Activated CD8-positive, alpha-beta T cell treated with anti-CD3 and anti-CD28 coated beads, Interleukin-2, amount 10 ng/mL, durations not matched to agents 7 days and 5 days (primary cell): ENCODE measurements at regions of chr4 and their contacts with region 1.

Region 1: DNA sequence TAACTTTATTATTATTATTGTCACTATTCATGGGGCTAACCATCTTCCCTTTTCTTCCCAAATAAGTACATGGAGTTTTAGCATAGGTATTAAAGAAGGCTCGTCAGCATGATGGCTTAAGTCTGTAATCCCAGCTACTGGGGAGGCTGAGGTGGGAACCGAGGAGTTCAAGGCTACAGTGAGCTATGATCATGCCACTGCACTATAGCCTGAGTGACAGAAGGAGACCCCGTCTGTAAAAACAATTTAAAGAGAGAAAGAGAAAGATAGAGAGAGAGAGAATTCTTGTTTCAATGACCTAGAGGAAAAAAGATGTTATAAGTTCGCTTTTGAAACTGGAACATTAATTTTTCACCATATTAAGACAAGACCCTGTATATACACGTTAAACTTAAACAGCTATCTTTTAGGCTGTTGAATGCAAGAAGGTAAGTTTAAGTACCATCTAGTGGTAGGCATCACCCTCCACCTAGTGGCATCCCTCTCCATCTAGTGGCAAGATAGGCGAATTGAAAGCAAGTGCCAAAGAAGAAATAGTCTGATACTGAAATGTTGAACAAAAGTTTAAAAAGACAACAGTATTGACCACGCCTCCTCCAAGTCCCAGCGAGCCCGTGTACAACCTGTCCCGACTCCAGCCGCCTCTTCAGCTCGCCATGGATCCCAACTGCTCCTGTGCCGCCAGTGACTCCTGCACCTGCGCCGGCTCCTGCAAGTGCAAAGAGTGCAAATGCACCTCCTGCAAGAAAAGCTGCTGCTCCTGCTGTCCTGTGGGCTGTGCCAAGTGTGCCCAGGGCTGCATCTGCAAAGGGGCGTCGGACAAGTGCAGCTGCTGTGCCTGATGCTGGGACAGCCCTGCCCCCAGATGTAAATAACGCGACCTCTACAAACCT is 26.0 kb upstream of the YTHDC1 start:
- DNase-seq: peak; percentile 64
- ATAC-seq: peak; percentile 85
- H3K4me3 Mint-ChIP-seq: peak overlapping the region; percentile 70
- H3K27ac Mint-ChIP-seq: no peak overlapping the region
- H3K4me1 Mint-ChIP-seq: peaks cover 21% of the 10 kb centered on the region
- H3K27me3 Mint-ChIP-seq: peaks cover 12% of the 10 kb centered on the region

Region 2: GRCh38 chr4:68271851-68272756 is 103.8 kb before region 1 on chr4:
- CTCF ChIA-PET with region 1: interaction called, 63 read pairs
- POLR2A ChIA-PET with region 1: no interaction called
- DNase-seq: no peak
- ATAC-seq: peak; percentile 27
- H3K4me3 Mint-ChIP-seq: peak overlapping the region; percentile 10
- H3K27ac Mint-ChIP-seq: no peak overlapping the region
- H3K4me1 Mint-ChIP-seq: peaks cover 9% of the 10 kb centered on the region
- H3K27me3 Mint-ChIP-seq: peaks cover 13% of the 10 kb centered on the region

Region 3: DNA sequence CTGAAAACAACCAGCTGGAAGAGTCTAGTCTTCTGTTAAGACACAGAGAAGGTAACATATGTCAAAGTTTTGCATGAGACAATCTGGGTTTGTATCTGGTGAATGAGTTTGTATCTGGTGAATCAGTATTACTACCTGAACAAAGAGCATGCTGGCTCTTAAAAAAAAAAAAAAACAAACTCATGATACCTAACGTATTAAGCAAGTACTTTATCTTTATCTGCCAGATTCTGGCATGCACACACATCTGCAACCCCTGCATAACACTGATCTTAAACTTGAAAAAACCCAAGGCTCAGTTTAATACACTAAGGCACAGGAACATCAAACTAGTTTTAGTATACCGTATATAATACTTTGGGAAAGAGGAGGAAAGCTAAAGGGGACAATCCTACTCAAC is 31.9 kb before region 1 on chr4:
- CTCF ChIA-PET with region 1: interaction called, 13 read pairs
- POLR2A ChIA-PET with region 1: no interaction called
- DNase-seq: no peak
- ATAC-seq: no peak
- H3K4me3 Mint-ChIP-seq: no peak overlapping the region
- H3K27ac Mint-ChIP-seq: no peak overlapping the region
- H3K4me1 Mint-ChIP-seq: peaks cover 49% of the 10 kb centered on the region
- H3K27me3 Mint-ChIP-seq: no peaks in the 10 kb centered on the region

Region 4: DNA sequence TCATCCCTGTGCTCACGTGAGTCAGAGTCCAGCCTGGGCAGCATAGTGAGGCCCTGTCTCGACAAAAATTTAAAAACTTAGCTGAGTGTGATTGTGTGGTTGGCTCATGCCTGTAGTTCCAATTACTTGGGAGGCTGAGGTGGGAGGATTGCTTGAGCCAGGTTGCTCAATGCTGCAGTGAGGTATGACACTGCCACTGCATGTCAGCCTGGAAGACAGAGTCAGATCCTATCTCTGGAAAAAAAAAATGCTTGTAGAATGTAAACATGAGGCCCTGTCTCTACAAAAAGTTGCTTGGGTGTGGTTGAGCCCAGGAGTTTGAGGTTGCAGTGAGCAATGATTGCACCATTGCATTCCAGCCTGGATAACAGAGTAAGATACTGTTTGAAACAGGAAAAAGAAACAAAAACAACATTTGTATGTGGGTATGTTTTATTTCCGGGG is 14.7 kb before region 1 on chr4:
- CTCF ChIA-PET with region 1: interaction called, 22 read pairs
- POLR2A ChIA-PET with region 1: no interaction called
- DNase-seq: no peak
- ATAC-seq: no peak
- H3K4me3 Mint-ChIP-seq: no peak overlapping the region
- H3K27ac Mint-ChIP-seq: no peak overlapping the region
- H3K4me1 Mint-ChIP-seq: peaks cover 12% of the 10 kb centered on the region
- H3K27me3 Mint-ChIP-seq: peaks cover 10% of the 10 kb centered on the region

Region 5: GRCh38 chr4:68451246-68452211 is 75.6 kb after region 1 on chr4:
- CTCF ChIA-PET with region 1: no interaction called
- POLR2A ChIA-PET with region 1: no interaction called
- DNase-seq: no peak
- ATAC-seq: peak; percentile 78
- H3K4me3 Mint-ChIP-seq: no peak overlapping the region
- H3K27ac Mint-ChIP-seq: no peak overlapping the region
- H3K4me1 Mint-ChIP-seq: peaks cover 20% of the 10 kb centered on the region
- H3K27me3 Mint-ChIP-seq: no peaks in the 10 kb centered on the region